MCF 10A (cell line): ENCODE measurements at regions of chr7 and their contacts with region 1.

Region 1: DNA sequence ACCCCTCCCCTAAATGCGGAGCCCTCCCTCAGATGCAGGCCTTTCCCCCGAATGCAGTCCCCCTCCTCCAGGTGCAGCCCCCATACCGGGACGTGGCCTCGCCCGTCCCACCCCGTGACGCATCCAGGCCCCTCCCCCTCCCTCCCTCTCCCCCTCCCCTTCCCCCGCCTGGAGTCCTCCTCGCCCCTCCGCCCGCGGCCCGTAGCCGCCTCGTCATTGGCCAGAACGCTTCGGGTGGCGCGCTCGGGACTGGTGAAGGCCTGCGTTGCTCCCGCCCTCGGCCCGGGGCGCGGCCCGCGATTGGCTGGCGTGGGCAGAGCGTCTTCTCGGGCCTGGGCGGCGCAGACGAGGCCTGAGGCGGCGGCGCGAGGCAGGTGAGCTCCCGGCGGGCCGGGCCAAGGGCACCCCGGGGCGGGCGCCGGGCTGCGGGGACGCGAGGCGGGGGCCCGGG is 16.0 kb upstream of the SUN1 start:
- DNase-seq: peak; percentile 98
- H3K4me3 Mint-ChIP-seq: peak overlapping the region; percentile 86
- H3K27ac Mint-ChIP-seq: no peak overlapping the region
- H3K4me1 Mint-ChIP-seq: peaks cover 38% of the 10 kb centered on the region
- H3K27me3 Mint-ChIP-seq: no peaks in the 10 kb centered on the region
- CTCF ChIP-seq: no peak

Region 2: GRCh38 chr7:561631-562373 is 254.5 kb before region 1 on chr7:
- CTCF ChIA-PET with region 1: no interaction called
- POLR2A ChIA-PET with region 1: no interaction called
- intact Hi-C with region 1: no loop called
- DNase-seq: no peak
- H3K4me3 Mint-ChIP-seq: no peak overlapping the region
- H3K27ac Mint-ChIP-seq: no peak overlapping the region
- H3K4me1 Mint-ChIP-seq: no peaks in the 10 kb centered on the region
- H3K27me3 Mint-ChIP-seq: no peaks in the 10 kb centered on the region
- CTCF ChIP-seq: no peak

Region 3: DNA sequence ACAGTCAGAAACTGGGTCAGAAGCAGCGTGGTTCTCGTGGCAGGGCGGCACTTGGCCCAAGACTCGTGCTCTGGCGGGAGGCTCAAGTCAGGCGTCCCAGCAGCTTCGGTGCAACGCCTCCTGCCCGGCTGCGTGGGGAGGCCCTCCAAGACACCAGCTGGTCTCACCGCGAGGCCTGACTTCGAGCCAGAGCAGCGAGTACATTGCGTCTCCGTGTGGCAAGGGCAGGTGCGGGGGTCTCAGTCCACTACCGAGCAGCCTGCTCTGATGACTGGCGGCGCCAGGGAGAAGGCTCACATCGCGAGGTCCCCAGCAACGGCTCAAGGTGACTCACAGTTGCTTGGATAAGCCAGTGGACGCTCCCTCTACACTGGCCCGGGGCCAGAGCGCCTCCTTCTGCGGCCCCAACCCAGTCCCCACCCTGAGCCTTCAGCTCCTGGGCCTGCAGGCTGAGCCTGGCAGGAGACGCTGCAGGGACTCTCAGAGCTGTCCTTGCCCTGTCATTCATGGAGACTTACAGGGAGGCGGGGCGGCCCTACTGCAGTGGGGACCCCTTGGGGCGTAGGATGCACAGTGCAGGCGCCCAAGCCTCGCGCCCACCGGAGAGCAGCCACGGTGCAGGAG is 47.3 kb before region 1 on chr7:
- CTCF ChIA-PET with region 1: no interaction called
- POLR2A ChIA-PET with region 1: interaction called, 11 read pairs
- intact Hi-C with region 1: no loop called
- DNase-seq: no peak
- H3K4me3 Mint-ChIP-seq: peak overlapping the region; percentile 79
- H3K27ac Mint-ChIP-seq: no peak overlapping the region
- H3K4me1 Mint-ChIP-seq: no peaks in the 10 kb centered on the region
- H3K27me3 Mint-ChIP-seq: no peaks in the 10 kb centered on the region
- CTCF ChIP-seq: no peak

Region 4: GRCh38 chr7:826245-826917 is 10.1 kb after region 1 on chr7:
- CTCF ChIA-PET with region 1: interaction called, 4 read pairs
- POLR2A ChIA-PET with region 1: interaction called, 185 read pairs
- intact Hi-C with region 1: loop called (anchors 1 kb)
- DNase-seq: no peak
- H3K4me3 Mint-ChIP-seq: no peak overlapping the region
- H3K27ac Mint-ChIP-seq: no peak overlapping the region
- H3K4me1 Mint-ChIP-seq: peaks cover 30% of the 10 kb centered on the region
- H3K27me3 Mint-ChIP-seq: no peaks in the 10 kb centered on the region
- CTCF ChIP-seq: no peak

Region 5: DNA sequence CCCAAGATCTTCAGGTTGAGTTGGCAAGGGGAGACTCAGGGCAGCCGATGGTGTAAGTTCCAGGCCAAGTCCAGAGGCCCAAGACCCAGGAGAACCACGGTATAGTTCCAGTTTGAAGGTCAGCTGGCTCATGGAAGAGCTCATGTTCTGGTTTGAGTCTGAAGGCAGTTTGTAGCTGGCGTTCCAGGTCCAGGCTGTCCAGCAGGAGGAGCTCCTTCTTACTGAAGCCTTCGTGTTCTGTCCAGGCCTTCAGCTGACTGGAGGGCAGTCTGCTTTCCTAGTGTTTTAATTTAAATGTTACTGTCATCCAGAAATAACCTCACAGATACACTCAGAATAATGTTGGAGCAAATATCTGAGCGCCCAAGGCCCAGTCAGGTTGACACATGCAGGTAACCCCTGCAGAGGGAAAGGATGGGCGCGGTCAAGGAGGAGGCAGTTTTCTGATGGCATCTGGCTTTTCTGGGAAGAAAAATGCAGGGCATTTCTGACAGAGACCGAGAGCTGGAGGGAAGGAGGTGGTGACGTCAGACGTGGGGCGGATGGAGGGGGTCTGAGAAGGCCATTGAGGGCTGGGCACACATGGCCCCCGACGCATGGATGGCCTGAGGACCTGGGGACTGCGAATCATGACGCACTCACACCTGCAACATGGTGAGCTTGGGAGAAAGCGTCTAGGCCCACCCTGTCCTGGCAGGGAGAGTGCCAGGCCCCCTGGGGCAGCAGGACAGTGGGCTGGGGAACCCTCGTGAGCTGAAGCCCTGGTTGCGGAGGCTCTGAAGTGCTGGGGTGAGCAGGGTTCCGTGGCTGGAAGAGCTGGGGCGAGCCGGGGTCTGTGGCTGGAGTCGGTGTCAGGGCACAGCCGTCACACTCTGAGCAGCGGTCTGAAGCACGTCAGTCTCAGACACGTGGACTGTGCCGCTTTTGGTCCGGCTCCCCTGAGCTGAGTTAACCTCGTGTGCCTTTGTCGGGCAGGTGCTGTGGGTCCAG is 20.4 kb after region 1 on chr7:
- CTCF ChIA-PET with region 1: interaction called, 6 read pairs
- POLR2A ChIA-PET with region 1: interaction called, 185 read pairs
- intact Hi-C with region 1: loop called (anchors 1 kb)
- DNase-seq: peak; percentile 75
- H3K4me3 Mint-ChIP-seq: peak overlapping the region; percentile 28
- H3K27ac Mint-ChIP-seq: peak overlapping the region; percentile 100
- H3K4me1 Mint-ChIP-seq: peaks cover 31% of the 10 kb centered on the region
- H3K27me3 Mint-ChIP-seq: no peaks in the 10 kb centered on the region
- CTCF ChIP-seq: peak; percentile 46

Region 6: DNA sequence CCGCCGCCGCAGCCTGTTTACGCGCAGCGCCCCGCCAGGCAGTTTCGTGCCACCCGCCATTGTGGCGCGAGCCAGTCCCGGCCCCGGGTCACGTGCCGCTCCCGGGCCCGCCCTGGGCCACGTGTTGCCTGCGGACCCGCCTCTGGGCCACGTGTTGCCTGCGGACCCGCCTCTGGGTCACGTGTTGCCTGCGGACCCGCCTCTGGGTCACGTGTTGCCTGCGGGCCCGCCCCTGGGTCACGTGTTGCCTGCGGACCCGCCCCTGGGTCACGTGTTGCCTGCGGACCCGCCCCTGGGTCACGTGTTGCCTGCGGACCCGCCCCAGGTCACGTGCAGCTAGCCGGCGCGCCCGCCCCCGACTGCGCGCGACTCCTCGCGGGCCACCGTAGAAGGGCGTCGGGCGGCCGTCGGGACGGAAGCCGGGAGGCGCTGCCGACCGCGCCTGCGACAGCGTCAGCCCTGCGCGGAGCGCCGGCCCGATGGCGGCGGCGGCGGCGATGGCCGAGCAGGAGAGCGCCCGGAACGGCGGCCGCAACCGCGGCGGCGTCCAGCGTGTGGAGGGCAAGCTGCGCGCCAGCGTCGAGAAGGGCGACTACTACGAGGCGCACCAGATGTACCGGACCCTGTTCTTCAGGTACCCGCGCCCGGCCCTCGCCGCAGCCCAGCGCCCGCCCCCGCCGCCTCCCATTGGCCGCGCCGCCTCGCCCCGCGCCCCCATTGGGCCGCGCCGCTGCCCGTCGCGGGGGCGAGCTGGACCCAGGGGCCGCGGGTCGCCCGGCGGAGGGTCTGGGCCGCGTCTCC is 60.0 kb after region 1 on chr7 and contains the start of gene GET4:
- CTCF ChIA-PET with region 1: interaction called, 12 read pairs
- POLR2A ChIA-PET with region 1: interaction called, 22 read pairs
- intact Hi-C with region 1: no loop called
- DNase-seq: peak; percentile 87
- H3K4me3 Mint-ChIP-seq: peak within 1 kb of the TSS; percentile 99
- H3K27ac Mint-ChIP-seq: peak within 1 kb of the TSS; percentile 93
- H3K4me1 Mint-ChIP-seq: no peaks in the 10 kb centered on the region
- H3K27me3 Mint-ChIP-seq: no peaks in the 10 kb centered on the region
- CTCF ChIP-seq: peak; percentile 20
- total RNA-seq, gene GET4: 32.6 and 43.9 TPM in 2 replicates